Right cardiac atrium (tissue), 5 donors: ENCODE measurements at regions of chr1 and their contacts with region 1.

Region 1: DNA sequence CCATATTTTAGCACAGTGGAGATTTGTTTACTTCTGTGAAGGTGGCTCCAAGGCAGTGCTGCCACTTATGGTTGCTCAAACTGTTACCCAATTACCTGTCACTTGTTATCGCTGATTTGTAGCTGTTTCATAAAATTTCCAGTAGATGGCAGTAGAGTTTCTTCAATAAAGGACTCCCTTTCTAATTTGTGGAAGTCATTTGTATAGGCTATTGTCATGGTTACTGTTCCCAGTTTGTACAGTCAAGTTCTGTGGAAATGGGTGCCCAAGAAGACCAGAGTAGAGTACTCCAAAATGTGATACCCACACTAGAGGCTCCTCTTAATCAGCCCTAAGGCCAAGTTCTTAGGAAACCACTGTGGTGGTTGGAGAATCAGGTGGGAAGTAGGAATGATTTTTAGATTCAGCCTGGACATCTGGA is 186.1 kb downstream of the CLEC20A start:
- DNase-seq: peak in 1 of 3 donors; percentile 24
- ATAC-seq: peak; percentile 85 to 89
- H3K4me3 ChIP-seq: no peak overlapping the region
- H3K27ac ChIP-seq: no peak overlapping the region
- H3K4me1 ChIP-seq: no peaks in the 10 kb centered on the region
- H3K27me3 ChIP-seq: no peaks in the 10 kb centered on the region

Region 2: GRCh38 chr1:178023181-178023618 is 287.5 kb before region 1 on chr1:
- intact Hi-C with region 1: no loop called
- DNase-seq: no peak
- ATAC-seq: no peak
- H3K4me3 ChIP-seq: no peak overlapping the region
- H3K27ac ChIP-seq: no peak overlapping the region
- H3K4me1 ChIP-seq: no peaks in the 10 kb centered on the region
- H3K27me3 ChIP-seq: no peaks in the 10 kb centered on the region

Region 3: GRCh38 chr1:178494569-178494971 is 183.9 kb after region 1 on chr1:
- intact Hi-C with region 1: loop called in 1 of 4 experiments (anchors 5 kb)
- DNase-seq: no peak
- ATAC-seq: no peak
- H3K4me3 ChIP-seq: no peak overlapping the region
- H3K27ac ChIP-seq: no peak overlapping the region
- H3K4me1 ChIP-seq: no peaks in the 10 kb centered on the region
- H3K27me3 ChIP-seq: no peaks in the 10 kb centered on the region

Region 4: GRCh38 chr1:178501705-178502329 is 191.1 kb after region 1 on chr1:
- intact Hi-C with region 1: loop called in 2 of 4 experiments (anchors 5 to 10 kb)
- DNase-seq: peak; percentile 71 to 86 (median 85)
- ATAC-seq: peak; percentile 56 to 79
- H3K4me3 ChIP-seq: no peak overlapping the region
- H3K27ac ChIP-seq: no peak overlapping the region
- H3K4me1 ChIP-seq: no peaks in the 10 kb centered on the region
- H3K27me3 ChIP-seq: no peaks in the 10 kb centered on the region